H1 (cell line): ENCODE measurements at regions of chr11 and their contacts with region 1.

Region 1: DNA sequence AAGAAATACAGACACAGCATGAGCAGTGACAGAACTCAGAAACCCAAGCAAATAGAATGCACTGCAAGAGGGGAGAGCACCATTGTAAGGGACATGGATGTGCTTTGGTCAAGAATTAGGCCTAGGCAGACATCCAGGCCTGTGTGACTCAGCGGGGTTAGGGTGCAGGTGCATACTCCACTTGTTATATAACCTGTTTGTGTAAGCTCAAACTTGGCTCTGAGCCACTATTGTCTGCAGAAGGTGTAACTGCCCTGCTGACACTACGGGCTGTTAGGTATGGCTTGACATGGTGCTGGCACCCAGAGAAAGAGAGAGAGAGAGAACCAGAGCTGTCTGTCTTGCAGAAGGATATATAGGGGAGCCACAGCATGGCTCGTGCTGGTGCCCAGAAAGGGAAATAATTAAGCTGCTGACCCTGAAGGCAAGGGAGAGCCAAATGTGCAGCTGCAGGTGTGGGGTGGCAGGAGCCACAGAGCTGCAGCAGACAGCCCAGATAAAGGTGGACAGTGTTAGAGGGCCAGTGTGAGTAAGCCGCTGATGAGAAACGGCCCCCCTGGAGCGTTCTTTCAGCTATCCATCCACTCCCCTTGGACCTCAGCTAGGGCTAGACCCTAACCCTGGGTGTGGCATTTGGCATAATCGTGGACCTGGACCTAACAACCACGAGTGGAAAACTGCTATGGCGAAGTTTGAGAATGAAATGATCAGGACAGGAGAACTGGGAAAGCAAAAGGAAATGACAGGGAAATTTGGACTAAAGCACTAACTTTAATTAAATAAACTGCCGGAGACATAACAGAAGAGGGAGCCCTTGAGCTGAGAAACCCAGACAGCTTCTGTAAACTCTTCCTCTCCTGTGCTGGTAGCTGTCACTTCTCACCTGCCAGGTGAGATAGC is 253.0 kb upstream of the CCDC179 start:
- DNase-seq: peak in 1 of 2 experiments; percentile 52
- H3K4me3 ChIP-seq: no peak overlapping the region
- H3K27ac ChIP-seq: no peak overlapping the region
- H3K4me1 ChIP-seq: peaks cover 0 to 9% (median 2%) of the 10 kb centered on the region in 4 experiments; a peak in 5 of 7 replicates
- H3K27me3 ChIP-seq: peaks cover 0 to 1% (median 0%) of the 10 kb centered on the region in 4 experiments; a peak in 1 of 7 replicates
- CTCF ChIP-seq: peak in 2 of 3 experiments; percentile 59 to 65; a peak in 3 of 4 replicates
- EP300 ChIP-seq: no peak
- POLR2A ChIP-seq: no peak
- RAD21 ChIP-seq: peak; percentile 90 to 92

Region 2: DNA sequence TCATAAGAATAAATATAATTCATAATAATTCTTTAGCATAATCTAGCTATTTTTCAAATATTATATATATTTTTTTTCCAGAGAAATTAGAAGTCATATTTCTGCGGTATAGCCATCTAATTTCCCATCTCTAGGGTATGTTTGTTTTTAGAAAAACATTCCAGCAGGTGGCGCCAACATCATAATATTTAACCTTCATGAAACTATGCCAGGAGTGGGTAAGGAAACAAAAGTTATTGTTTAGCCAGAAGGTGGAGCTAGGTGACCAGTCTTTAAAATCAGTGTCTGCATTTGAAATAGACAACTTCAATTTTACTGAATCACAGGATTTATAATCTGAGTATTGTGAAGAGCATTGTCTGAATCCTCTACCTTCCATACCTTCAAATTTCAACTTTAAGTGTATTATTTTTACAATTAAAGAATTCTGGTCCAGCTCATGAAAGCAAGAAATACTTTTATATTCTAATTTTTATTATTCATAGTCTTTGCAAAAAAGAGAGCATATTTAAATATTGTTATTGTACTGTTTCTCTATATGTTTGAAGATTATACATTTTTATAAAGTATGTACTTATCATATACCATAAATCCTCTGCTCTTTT is 237.3 kb before region 1 on chr11:
- CTCF ChIA-PET with region 1: interaction called, 26 read pairs
- POLR2A ChIA-PET with region 1: no interaction called
- DNase-seq: peak in 1 of 2 experiments; percentile 52
- H3K4me3 ChIP-seq: no peak overlapping the region
- H3K27ac ChIP-seq: no peak overlapping the region
- H3K4me1 ChIP-seq: no peaks in the 10 kb centered on the region
- H3K27me3 ChIP-seq: no peaks in the 10 kb centered on the region
- CTCF ChIP-seq: peak in 2 of 3 experiments; percentile 70 to 93; a peak in 3 of 4 replicates
- EP300 ChIP-seq: no peak
- POLR2A ChIP-seq: no peak
- RAD21 ChIP-seq: peak; percentile 85 to 91

Region 3: GRCh38 chr11:23021287-23021863 is 91.9 kb before region 1 on chr11:
- CTCF ChIA-PET with region 1: interaction called, 11 read pairs
- POLR2A ChIA-PET with region 1: no interaction called
- DNase-seq: peak in 1 of 2 experiments; percentile 2
- H3K4me3 ChIP-seq: no peak overlapping the region
- H3K27ac ChIP-seq: no peak overlapping the region; the same call in 1 of the 2 replicates
- H3K4me1 ChIP-seq: no peaks in the 10 kb centered on the region
- H3K27me3 ChIP-seq: no peaks in the 10 kb centered on the region
- CTCF ChIP-seq: peak; percentile 31 to 83 (median 76)
- EP300 ChIP-seq: no peak
- POLR2A ChIP-seq: no peak
- RAD21 ChIP-seq: peak; percentile 89 to 94

Region 4: GRCh38 chr11:23123753-23124152 is 10.5 kb after region 1 on chr11:
- CTCF ChIA-PET with region 1: interaction called, 10 read pairs
- POLR2A ChIA-PET with region 1: no interaction called
- DNase-seq: no peak
- H3K4me3 ChIP-seq: no peak overlapping the region
- H3K27ac ChIP-seq: no peak overlapping the region
- H3K4me1 ChIP-seq: peaks cover 0 to 3% (median 0%) of the 10 kb centered on the region in 4 experiments; a peak in 1 of 7 replicates
- H3K27me3 ChIP-seq: no peaks in the 10 kb centered on the region
- CTCF ChIP-seq: no peak
- EP300 ChIP-seq: no peak
- POLR2A ChIP-seq: no peak
- RAD21 ChIP-seq: no peak

Region 5: DNA sequence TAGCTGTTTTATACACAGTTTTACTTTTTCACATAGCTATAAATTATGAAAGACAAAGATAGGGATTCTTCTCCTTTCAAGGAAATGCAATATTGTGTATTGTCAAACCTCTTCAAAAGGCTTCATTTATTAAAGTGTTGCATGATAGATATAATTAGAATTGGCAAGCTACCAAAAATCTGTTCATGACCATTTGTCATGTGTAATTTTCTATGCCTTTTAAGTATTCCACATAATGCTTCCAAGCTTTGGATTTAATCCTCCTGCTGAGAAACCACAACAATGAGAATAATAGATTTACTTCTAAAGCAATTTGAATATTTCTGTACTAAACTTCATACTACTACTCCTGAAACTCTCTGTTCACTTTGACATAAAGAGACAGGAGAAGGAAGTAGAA is 150.2 kb after region 1 on chr11:
- CTCF ChIA-PET with region 1: interaction called, 12 read pairs
- POLR2A ChIA-PET with region 1: no interaction called
- DNase-seq: no peak
- H3K4me3 ChIP-seq: no peak overlapping the region
- H3K27ac ChIP-seq: no peak overlapping the region
- H3K4me1 ChIP-seq: no peaks in the 10 kb centered on the region
- H3K27me3 ChIP-seq: no peaks in the 10 kb centered on the region
- CTCF ChIP-seq: no peak
- EP300 ChIP-seq: no peak
- POLR2A ChIP-seq: no peak
- RAD21 ChIP-seq: no peak

Region 6: GRCh38 chr11:23540101-23540561 is 426.9 kb after region 1 on chr11:
- CTCF ChIA-PET with region 1: interaction called, 11 read pairs
- POLR2A ChIA-PET with region 1: no interaction called
- DNase-seq: peak; percentile 49 to 50
- H3K4me3 ChIP-seq: no peak overlapping the region
- H3K27ac ChIP-seq: no peak overlapping the region
- H3K4me1 ChIP-seq: peaks cover 0 to 3% (median 0%) of the 10 kb centered on the region in 4 experiments; a peak in 2 of 7 replicates
- H3K27me3 ChIP-seq: no peaks in the 10 kb centered on the region
- CTCF ChIP-seq: peak; percentile 29 to 72 (median 62)
- EP300 ChIP-seq: no peak
- POLR2A ChIP-seq: no peak
- RAD21 ChIP-seq: peak; percentile 78 to 81